ENCODE measurements at regions of chr7 and their contacts with region 1.

Region 1: GRCh38 chr7:38796626-38797501 is 112.1 kb downstream of the VPS41 start:
- DNase-seq: peak; percentile 20 to 70
- ATAC-seq: peak in 1 of 3 donors; percentile 38
- H3K4me3 ChIP-seq: no peak overlapping the region
- H3K4me3 Mint-ChIP-seq: no peak overlapping the region
- H3K27ac ChIP-seq: no peak overlapping the region
- H3K27ac Mint-ChIP-seq: peak overlapping the region in 1 of 2 donors; percentile 58
- H3K4me1 ChIP-seq: no peaks in the 10 kb centered on the region
- H3K4me1 Mint-ChIP-seq: peaks cover 0 to 10% of the 10 kb centered on the region in 2 donors
- H3K27me3 ChIP-seq: no peaks in the 10 kb centered on the region
- H3K27me3 Mint-ChIP-seq: no peaks in the 10 kb centered on the region
- CTCF ChIP-seq: peak; percentile 86

Region 2: GRCh38 chr7:38840736-38841460 is 44.0 kb after region 1 on chr7:
- intact Hi-C with region 1: no loop called
- DNase-seq: no peak
- ATAC-seq: no peak
- H3K4me3 ChIP-seq: no peak overlapping the region
- H3K4me3 Mint-ChIP-seq: no peak overlapping the region
- H3K27ac ChIP-seq: no peak overlapping the region
- H3K27ac Mint-ChIP-seq: no peak overlapping the region
- H3K4me1 ChIP-seq: no peaks in the 10 kb centered on the region
- H3K4me1 Mint-ChIP-seq: peaks cover 29 to 34% of the 10 kb centered on the region in 2 donors
- H3K27me3 ChIP-seq: no peaks in the 10 kb centered on the region
- H3K27me3 Mint-ChIP-seq: no peaks in the 10 kb centered on the region
- CTCF ChIP-seq: no peak

Region 3: DNA sequence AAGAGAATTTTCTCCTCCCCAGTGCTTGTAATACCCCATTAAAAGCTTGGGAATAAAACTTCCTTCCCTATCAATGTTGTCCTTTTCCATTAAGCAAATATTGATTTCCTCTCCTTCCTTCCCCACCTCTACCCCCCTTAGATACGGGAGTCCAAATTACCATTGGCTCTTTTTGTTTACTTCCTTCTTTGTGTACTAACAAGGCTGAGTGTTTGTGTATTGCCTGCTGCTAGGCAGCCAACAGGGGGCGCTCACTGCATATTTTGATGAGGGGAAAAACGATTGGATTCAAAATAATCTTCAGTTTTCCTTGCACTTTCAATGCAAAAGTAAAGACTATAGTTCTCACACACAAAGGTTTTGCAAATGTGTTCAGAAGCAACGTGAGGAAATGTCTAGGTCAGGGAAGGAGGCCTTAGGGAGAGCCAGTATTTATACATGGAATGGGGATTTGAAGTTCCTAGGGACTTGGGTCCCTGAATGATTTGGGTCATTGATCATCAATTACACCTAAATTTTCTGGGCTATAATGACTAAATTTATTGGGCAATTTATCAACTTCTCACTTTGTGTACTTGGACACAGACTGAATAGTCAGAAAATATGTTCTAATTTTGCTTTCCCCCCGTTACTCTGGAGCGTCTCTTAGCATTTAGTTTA is 135.8 kb after region 1 on chr7:
- intact Hi-C with region 1: loop called (anchors 2 kb)
- DNase-seq: peak; percentile 38 to 53
- ATAC-seq: peak in 2 of 3 donors; percentile 34 to 42
- H3K4me3 ChIP-seq: no peak overlapping the region
- H3K4me3 Mint-ChIP-seq: no peak overlapping the region
- H3K27ac ChIP-seq: no peak overlapping the region
- H3K27ac Mint-ChIP-seq: no peak overlapping the region
- H3K4me1 ChIP-seq: no peaks in the 10 kb centered on the region
- H3K4me1 Mint-ChIP-seq: no peaks in the 10 kb centered on the region
- H3K27me3 ChIP-seq: no peaks in the 10 kb centered on the region
- H3K27me3 Mint-ChIP-seq: peaks cover 4 to 21% of the 10 kb centered on the region in 2 donors
- CTCF ChIP-seq: peak; percentile 82

Region 4: GRCh38 chr7:39172137-39172536 is 375.3 kb after region 1 on chr7:
- intact Hi-C with region 1: no loop called
- DNase-seq: no peak
- ATAC-seq: no peak
- H3K4me3 ChIP-seq: no peak overlapping the region
- H3K4me3 Mint-ChIP-seq: no peak overlapping the region
- H3K27ac ChIP-seq: no peak overlapping the region
- H3K27ac Mint-ChIP-seq: no peak overlapping the region
- H3K4me1 ChIP-seq: no peaks in the 10 kb centered on the region
- H3K4me1 Mint-ChIP-seq: no peaks in the 10 kb centered on the region
- H3K27me3 ChIP-seq: no peaks in the 10 kb centered on the region
- H3K27me3 Mint-ChIP-seq: peaks cover 0 to 8% of the 10 kb centered on the region in 2 donors
- CTCF ChIP-seq: no peak

Region 5: GRCh38 chr7:39465055-39465929 is 668.4 kb after region 1 on chr7:
- intact Hi-C with region 1: loop called (anchors 1 kb)
- DNase-seq: peak in 1 of 2 donors; percentile 56
- ATAC-seq: peak in 1 of 3 donors; percentile 67
- H3K4me3 ChIP-seq: no peak overlapping the region
- H3K4me3 Mint-ChIP-seq: no peak overlapping the region
- H3K27ac ChIP-seq: no peak overlapping the region
- H3K27ac Mint-ChIP-seq: no peak overlapping the region
- H3K4me1 ChIP-seq: no peaks in the 10 kb centered on the region
- H3K4me1 Mint-ChIP-seq: peaks cover 0 to 5% of the 10 kb centered on the region in 2 donors
- H3K27me3 ChIP-seq: no peaks in the 10 kb centered on the region
- H3K27me3 Mint-ChIP-seq: peaks cover 14 to 15% of the 10 kb centered on the region in 2 donors
- CTCF ChIP-seq: peak; percentile 36

Region 6: DNA sequence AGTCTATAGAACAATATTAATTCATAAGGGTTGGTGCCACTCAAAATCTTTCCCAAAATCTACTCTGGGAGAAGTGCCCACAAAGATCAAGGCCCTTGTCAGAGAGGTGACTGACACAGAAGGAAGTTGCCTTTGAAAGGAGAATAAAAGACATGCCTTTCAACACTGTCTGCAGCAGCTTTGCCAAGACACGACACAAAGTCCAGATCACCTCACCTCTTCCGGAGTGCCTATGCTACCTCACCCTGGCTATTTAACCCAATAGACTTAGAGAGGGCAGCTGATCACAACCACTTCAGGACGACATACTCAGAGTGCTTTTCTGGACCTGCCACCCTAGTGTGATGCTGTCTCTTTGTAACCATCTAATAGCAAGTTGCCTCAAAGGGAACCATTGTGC is 720.4 kb after region 1 on chr7:
- intact Hi-C with region 1: loop called (anchors 1 kb)
- DNase-seq: no peak
- ATAC-seq: no peak
- H3K4me3 ChIP-seq: no peak overlapping the region
- H3K4me3 Mint-ChIP-seq: no peak overlapping the region
- H3K27ac ChIP-seq: no peak overlapping the region
- H3K27ac Mint-ChIP-seq: no peak overlapping the region
- H3K4me1 ChIP-seq: no peaks in the 10 kb centered on the region
- H3K4me1 Mint-ChIP-seq: peaks cover 0 to 5% of the 10 kb centered on the region in 2 donors
- H3K27me3 ChIP-seq: no peaks in the 10 kb centered on the region
- H3K27me3 Mint-ChIP-seq: no peaks in the 10 kb centered on the region
- CTCF ChIP-seq: no peak

Measured in natural killer cell (primary cell).